CD8-positive, alpha-beta T cell (primary cell): ENCODE measurements at regions of chr1 and their contacts with region 1.

Region 1: DNA sequence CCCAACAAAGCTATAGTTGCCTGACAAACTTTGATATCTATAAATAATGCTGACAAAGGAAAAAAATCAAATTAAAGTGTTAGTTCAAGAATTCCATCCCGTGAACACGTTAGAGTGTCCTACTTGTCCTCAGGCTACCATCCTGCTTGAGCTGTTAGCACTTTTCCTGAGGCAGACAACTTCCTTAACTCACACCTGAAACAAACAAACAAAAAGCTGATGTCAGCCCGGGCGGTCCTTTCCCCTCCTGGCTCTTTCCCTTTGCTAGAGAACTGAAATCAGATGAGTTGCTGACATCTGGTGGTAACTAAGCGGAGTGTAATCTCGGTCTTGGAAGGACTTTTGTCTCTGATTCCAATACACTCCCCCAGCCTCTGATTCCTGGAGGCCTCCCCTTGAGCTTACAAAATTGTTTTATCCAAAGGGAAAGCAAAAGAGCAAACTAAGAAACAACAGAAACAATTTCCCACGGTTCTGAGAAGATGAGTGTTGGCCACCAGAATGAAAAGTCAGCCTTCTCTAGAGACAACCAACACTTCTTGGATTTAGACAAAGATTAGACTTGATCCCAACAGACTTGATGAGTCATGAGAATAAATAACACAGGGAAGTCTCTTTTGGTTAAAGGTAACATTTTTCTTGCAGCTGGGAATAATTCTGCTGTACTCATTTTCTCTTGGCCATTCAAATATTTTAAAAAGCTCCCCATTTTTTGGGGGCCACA is 135.4 kb downstream of the PROX1 start:
- DNase-seq: peak in 3 of 9 experiments; percentile 10 to 53 (median 19)
- ATAC-seq: no peak
- H3K4me3 ChIP-seq: no peak overlapping the region
- H3K4me3 Mint-ChIP-seq: no peak overlapping the region
- H3K27ac ChIP-seq: no peak overlapping the region
- H3K27ac Mint-ChIP-seq: no peak overlapping the region
- H3K4me1 ChIP-seq: no peaks in the 10 kb centered on the region
- H3K4me1 Mint-ChIP-seq: no peaks in the 10 kb centered on the region
- H3K27me3 ChIP-seq: no peaks in the 10 kb centered on the region
- H3K27me3 Mint-ChIP-seq: peaks cover 13% of the 10 kb centered on the region
- CTCF ChIP-seq: no peak

Region 2: GRCh38 chr1:213244664-213245091 is 878.5 kb before region 1 on chr1:
- CTCF ChIA-PET with region 1: no interaction called
- POLR2A ChIA-PET with region 1: no interaction called
- intact Hi-C with region 1: loop called (anchors 5 kb)
- DNase-seq: peak in 3 of 9 experiments; percentile 9 to 55 (median 45)
- ATAC-seq: no peak
- H3K4me3 ChIP-seq: no peak overlapping the region
- H3K4me3 Mint-ChIP-seq: no peak overlapping the region
- H3K27ac ChIP-seq: no peak overlapping the region
- H3K27ac Mint-ChIP-seq: no peak overlapping the region
- H3K4me1 ChIP-seq: no peaks in the 10 kb centered on the region
- H3K4me1 Mint-ChIP-seq: no peaks in the 10 kb centered on the region
- H3K27me3 ChIP-seq: no peaks in the 10 kb centered on the region
- H3K27me3 Mint-ChIP-seq: no peaks in the 10 kb centered on the region
- CTCF ChIP-seq: peak; percentile 96

Region 3: GRCh38 chr1:213256438-213257087 is 866.7 kb before region 1 on chr1:
- CTCF ChIA-PET with region 1: no interaction called
- POLR2A ChIA-PET with region 1: interaction called, 3 read pairs
- intact Hi-C with region 1: loop called in 1 of 2 experiments (anchors 5 kb)
- DNase-seq: no peak
- ATAC-seq: no peak
- H3K4me3 ChIP-seq: no peak overlapping the region
- H3K4me3 Mint-ChIP-seq: no peak overlapping the region
- H3K27ac ChIP-seq: no peak overlapping the region
- H3K27ac Mint-ChIP-seq: no peak overlapping the region
- H3K4me1 ChIP-seq: no peaks in the 10 kb centered on the region
- H3K4me1 Mint-ChIP-seq: no peaks in the 10 kb centered on the region
- H3K27me3 ChIP-seq: no peaks in the 10 kb centered on the region
- H3K27me3 Mint-ChIP-seq: no peaks in the 10 kb centered on the region
- CTCF ChIP-seq: no peak

Region 4: GRCh38 chr1:213374369-213374768 is 748.9 kb before region 1 on chr1:
- CTCF ChIA-PET with region 1: interaction called, 4 read pairs
- POLR2A ChIA-PET with region 1: no interaction called
- intact Hi-C with region 1: loop called in 1 of 2 experiments (anchors 5 kb)
- DNase-seq: peak; percentile 13 to 53 (median 32)
- ATAC-seq: no peak
- H3K4me3 ChIP-seq: no peak overlapping the region
- H3K4me3 Mint-ChIP-seq: no peak overlapping the region
- H3K27ac ChIP-seq: no peak overlapping the region
- H3K27ac Mint-ChIP-seq: no peak overlapping the region
- H3K4me1 ChIP-seq: no peaks in the 10 kb centered on the region
- H3K4me1 Mint-ChIP-seq: no peaks in the 10 kb centered on the region
- H3K27me3 ChIP-seq: no peaks in the 10 kb centered on the region
- H3K27me3 Mint-ChIP-seq: no peaks in the 10 kb centered on the region
- CTCF ChIP-seq: peak; percentile 73

Region 5: DNA sequence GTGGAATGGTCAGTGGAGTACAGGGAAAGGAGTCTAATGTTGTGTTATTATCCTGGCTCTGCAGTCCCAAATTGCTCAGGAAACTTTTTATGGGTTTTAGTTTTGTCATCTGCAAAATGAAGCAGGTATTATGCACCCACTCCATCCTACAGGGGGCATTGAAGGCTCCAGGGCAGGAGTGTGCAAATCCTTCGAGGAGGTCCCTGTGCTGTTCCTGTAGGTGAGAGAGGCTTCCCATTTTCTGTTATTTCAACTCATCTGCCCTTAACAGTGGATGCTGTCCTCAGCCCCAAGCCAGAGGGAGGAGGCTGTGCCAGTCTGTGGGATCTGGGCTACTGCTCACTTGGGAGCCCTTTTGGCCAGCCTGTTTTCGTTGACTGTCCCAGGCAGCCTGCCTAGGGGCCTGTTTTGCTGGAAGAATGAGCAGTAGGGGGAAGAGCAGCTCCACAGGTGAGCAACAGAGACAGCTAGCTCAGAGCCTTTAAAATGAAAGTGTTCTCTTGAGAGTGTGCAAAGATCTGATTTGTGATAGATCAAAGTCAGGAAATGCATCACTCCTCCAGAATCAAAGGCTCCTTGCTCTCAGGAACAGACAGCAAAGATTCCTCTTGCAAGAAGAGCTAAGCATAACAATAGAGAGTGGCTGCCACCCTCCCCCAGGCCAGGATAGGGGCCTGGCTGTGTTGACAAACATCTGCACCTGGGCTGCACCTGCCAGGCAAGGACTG is 453.1 kb before region 1 on chr1:
- CTCF ChIA-PET with region 1: interaction called, 12 read pairs
- POLR2A ChIA-PET with region 1: no interaction called
- intact Hi-C with region 1: loop called in 1 of 2 experiments (anchors 5 kb)
- DNase-seq: peak; percentile 1 to 62 (median 12)
- ATAC-seq: peak; percentile 90
- H3K4me3 ChIP-seq: no peak overlapping the region
- H3K4me3 Mint-ChIP-seq: no peak overlapping the region
- H3K27ac ChIP-seq: no peak overlapping the region
- H3K27ac Mint-ChIP-seq: peak overlapping the region; percentile 25
- H3K4me1 ChIP-seq: peaks cover 5% of the 10 kb centered on the region
- H3K4me1 Mint-ChIP-seq: peaks cover 7% of the 10 kb centered on the region
- H3K27me3 ChIP-seq: no peaks in the 10 kb centered on the region
- H3K27me3 Mint-ChIP-seq: no peaks in the 10 kb centered on the region
- CTCF ChIP-seq: no peak

Region 6: DNA sequence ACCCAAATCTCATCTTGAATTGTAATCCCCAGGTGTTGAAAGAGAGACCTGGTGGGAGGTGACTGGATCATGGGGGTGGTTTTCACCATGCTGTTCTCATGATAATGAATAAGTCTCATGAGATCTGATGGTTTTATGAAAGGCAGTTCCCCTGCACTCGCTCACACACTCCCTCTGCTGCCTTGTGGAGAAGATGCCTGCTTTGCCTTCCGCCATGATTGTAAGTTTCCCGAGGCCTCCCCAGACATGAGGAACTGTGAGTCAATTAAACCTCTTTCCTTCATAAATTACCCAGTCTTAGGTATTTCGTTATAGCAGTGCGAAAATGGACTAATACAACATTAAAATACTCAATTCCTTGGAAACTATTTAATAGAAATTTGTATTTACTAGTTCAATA is 36.3 kb before region 1 on chr1:
- CTCF ChIA-PET with region 1: no interaction called
- POLR2A ChIA-PET with region 1: no interaction called
- intact Hi-C with region 1: no loop called
- DNase-seq: no peak
- ATAC-seq: no peak
- H3K4me3 ChIP-seq: no peak overlapping the region
- H3K4me3 Mint-ChIP-seq: no peak overlapping the region
- H3K27ac ChIP-seq: no peak overlapping the region
- H3K27ac Mint-ChIP-seq: no peak overlapping the region
- H3K4me1 ChIP-seq: no peaks in the 10 kb centered on the region
- H3K4me1 Mint-ChIP-seq: no peaks in the 10 kb centered on the region
- H3K27me3 ChIP-seq: no peaks in the 10 kb centered on the region
- H3K27me3 Mint-ChIP-seq: peaks cover 8% of the 10 kb centered on the region
- CTCF ChIP-seq: no peak